Activated CD4-positive, alpha-beta T cell treated with anti-CD3 and anti-CD28 coated beads, Interleukin-2, amount 10 ng/mL, durations not matched to agents 24 days and 14 days (primary cell): ENCODE measurements at regions of chr4 and their contacts with region 1.

Region 1: GRCh38 chr4:15771216-15772058 is 6.7 kb upstream of the CD38 start:
- DNase-seq: peak; percentile 83
- H3K4me3 Mint-ChIP-seq: peak overlapping the region; percentile 54
- H3K27ac Mint-ChIP-seq: peak overlapping the region; percentile 80
- H3K4me1 Mint-ChIP-seq: peaks cover 62% of the 10 kb centered on the region
- H3K27me3 Mint-ChIP-seq: no peaks in the 10 kb centered on the region

Region 2: GRCh38 chr4:15794905-15795304 is 23.5 kb after region 1 on chr4:
- intact Hi-C with region 1: loop called (anchors 1 kb)
- DNase-seq: no peak
- H3K4me3 Mint-ChIP-seq: peak overlapping the region; percentile 49
- H3K27ac Mint-ChIP-seq: peak overlapping the region; percentile 79
- H3K4me1 Mint-ChIP-seq: peaks cover 50% of the 10 kb centered on the region
- H3K27me3 Mint-ChIP-seq: peaks cover 1% of the 10 kb centered on the region

Region 3: GRCh38 chr4:16524911-16525554 is 753.6 kb after region 1 on chr4:
- intact Hi-C with region 1: no loop called
- DNase-seq: no peak
- H3K4me3 Mint-ChIP-seq: no peak overlapping the region
- H3K27ac Mint-ChIP-seq: no peak overlapping the region
- H3K4me1 Mint-ChIP-seq: no peaks in the 10 kb centered on the region
- H3K27me3 Mint-ChIP-seq: no peaks in the 10 kb centered on the region